ENCODE measurements at regions of chr12 and their contacts with region 1.

Region 1: DNA sequence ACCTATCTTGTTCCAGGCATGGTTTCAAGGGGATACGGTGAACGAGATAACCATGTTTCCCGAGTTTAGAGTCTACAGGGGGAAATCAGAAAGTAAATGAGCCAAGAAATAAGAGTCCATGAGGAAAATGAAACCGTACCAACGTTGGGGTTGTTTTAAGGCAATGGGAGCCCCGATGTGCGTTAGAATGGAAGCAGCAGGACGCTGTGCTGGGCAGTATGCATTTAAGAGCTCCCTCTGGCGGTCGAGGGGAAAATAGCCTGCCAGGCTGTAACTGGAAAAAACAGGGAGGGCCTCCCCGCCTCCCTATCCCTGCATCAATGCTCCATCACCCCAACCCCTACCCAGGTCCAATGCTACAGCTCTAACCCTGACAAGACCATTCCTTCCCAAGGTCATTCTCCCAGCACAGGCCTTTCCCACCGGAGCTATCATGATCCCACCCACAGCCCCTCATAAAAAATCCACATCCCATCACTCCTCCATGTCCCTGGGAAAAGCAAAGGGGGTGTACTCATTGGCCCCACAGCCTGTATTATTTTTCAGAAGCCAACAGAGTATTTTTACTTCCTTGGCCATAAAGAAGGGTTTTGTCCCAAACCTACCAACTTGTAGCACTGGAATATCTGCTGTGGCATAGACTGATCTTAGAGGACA is 226.3 kb upstream of the NOS1 start:
- DNase-seq: no peak
- H3K4me3 ChIP-seq: no peak overlapping the region
- H3K27ac ChIP-seq: no peak overlapping the region
- H3K4me1 ChIP-seq: no peaks in the 10 kb centered on the region
- H3K27me3 ChIP-seq: no peaks in the 10 kb centered on the region
- CTCF ChIP-seq: peak in 2 of 3 experiments; percentile 59 to 69

Region 2: DNA sequence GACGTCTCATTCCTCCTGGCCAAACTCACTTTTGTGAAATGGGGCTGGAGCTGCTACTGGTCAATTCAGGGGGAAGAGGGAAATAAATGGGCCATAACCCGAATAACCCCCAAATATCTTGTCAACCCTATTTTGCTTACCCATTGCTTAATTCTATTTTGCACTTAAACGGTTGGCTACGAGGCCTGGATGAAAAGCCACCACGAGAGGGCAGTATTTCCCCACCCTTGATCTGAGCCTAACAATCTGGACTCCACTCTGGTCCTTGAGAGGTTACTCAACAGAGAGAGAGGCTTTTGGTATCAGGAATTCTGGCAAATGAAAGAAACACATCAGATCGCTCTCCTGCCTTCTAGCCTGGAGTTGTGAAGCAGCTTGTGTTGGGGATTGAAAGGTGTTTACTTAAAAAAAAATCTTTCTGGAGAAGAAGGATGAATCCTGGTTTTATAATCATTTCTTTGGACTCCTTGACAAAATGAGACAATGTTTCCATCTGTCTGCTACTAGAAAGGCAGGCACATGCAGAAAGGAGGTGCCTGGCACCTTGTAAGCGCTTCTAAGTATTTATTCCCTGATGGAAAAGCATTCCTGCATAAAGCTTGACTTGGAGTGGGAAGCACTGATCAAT is 375.1 kb before region 1 on chr12:
- intact Hi-C with region 1: loop called (anchors 5 kb)
- DNase-seq: peak in 1 of 2 donors; percentile 81
- H3K4me3 ChIP-seq: no peak overlapping the region
- H3K27ac ChIP-seq: no peak overlapping the region
- H3K4me1 ChIP-seq: no peaks in the 10 kb centered on the region
- H3K27me3 ChIP-seq: no peaks in the 10 kb centered on the region
- CTCF ChIP-seq: peak; percentile 59 to 89 (median 77)

Region 3: GRCh38 chr12:117367011-117367638 is 220.6 kb before region 1 on chr12:
- intact Hi-C with region 1: loop called (anchors 1 kb)
- DNase-seq: peak in 1 of 2 donors; percentile 71
- H3K4me3 ChIP-seq: no peak overlapping the region
- H3K27ac ChIP-seq: no peak overlapping the region
- H3K4me1 ChIP-seq: no peaks in the 10 kb centered on the region
- H3K27me3 ChIP-seq: no peaks in the 10 kb centered on the region
- CTCF ChIP-seq: peak; percentile 29 to 79 (median 59)